Heart left ventricle (tissue), 16 donors: ENCODE measurements at regions of chr2 and their contacts with region 1.

Region 1: DNA sequence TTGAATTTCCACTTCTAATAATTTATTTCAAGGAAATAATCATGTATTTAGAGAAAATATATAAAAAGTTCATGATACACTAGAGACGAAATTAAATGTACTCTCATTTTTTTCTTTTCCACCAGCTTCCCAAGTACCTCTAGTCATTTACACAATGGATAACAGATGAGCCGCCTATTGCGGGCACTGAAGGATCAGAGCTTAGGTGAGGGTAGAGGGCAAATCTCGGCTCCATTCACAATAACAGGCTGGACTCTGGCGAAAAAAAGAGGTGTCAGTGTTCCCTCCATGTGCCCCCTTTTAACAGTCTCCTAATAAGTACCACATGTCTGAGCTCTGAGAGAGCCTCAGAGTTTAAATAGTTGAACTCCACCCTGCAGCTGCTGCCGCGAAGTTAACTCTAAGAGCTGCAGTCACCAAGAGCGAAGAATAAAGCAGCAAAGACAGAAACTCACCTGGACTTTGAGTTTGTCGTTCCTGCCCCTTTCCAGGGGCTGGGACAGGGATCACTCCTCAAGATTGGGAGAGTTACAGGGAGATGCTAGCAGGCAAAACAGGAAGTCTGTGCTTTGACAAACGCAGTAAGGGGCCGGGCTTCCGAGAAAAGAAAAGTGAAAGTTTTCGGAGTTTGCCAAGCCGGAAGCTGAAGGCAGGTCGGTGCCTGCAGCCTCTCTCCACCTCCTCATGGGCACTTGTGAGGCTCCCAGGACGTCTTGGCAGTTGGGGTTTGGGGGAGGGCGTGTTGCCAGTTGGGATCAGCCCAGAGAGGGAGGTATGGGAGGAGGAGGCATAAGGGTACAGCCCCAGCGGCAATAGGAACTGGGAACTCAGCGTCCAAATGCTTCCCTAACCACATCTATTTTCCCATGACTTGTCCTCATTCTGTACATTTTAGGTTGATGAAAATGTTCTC is at the start of gene SP110:
- DNase-seq: peak; percentile 78 to 82 (median 81)
- ATAC-seq: peak; percentile 91 to 98 (median 96)
- H3K4me3 ChIP-seq: peak within 1 kb of the TSS; percentile 49 to 85 (median 71)
- H3K27ac ChIP-seq: peak within 1 kb of the TSS; percentile 47 to 94 (median 79)
- H3K4me1 ChIP-seq: peaks cover 0 to 43% (median 12%) of the 10 kb centered on the region in 12 donors
- H3K27me3 ChIP-seq: no peaks in the 10 kb centered on the region
- CTCF ChIP-seq: no peak
- POLR2A ChIP-seq: no peak
- total RNA-seq, gene SP110: 7.1 to 44.7 (median 10.7) TPM

Region 2: DNA sequence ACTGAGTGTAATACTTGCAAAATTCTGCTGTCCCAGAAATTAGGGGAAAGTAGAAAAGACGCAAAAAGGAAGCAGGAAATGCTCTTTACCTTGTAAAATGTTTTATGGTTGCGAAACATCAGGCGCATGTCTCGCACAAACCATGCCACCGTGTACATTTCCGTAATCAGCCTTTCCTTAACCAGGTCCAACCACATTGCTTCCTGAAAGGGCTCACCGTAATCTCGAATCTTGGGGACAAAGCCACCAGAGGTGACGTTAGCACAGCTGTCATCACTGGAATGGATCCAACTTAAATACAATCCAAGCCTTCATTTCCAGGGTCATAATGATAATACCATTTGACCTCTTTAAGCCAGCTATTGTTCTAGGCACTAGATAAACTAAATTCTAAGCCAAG is 49.1 kb before region 1 on chr2:
- intact Hi-C with region 1: no loop called
- DNase-seq: peak in 2 of 5 donors; percentile 21 to 34
- ATAC-seq: peak; percentile 40 to 94 (median 68)
- H3K4me3 ChIP-seq: peak overlapping the region in 2 of 12 donors; percentile 2 to 6
- H3K27ac ChIP-seq: peak overlapping the region in 10 of 12 donors; percentile 2 to 85 (median 50)
- H3K4me1 ChIP-seq: peaks cover 0 to 8% (median 0%) of the 10 kb centered on the region in 12 donors
- H3K27me3 ChIP-seq: no peaks in the 10 kb centered on the region
- CTCF ChIP-seq: no peak
- POLR2A ChIP-seq: no peak

Region 3: GRCh38 chr2:230326453-230327417 is 107.1 kb after region 1 on chr2 and contains the start of gene SP140L:
- intact Hi-C with region 1: loop called in 4 of 10 experiments (anchors 5 to 10 kb)
- DNase-seq: peak; percentile 71 to 87 (median 79)
- ATAC-seq: peak; percentile 82 to 96 (median 94)
- H3K4me3 ChIP-seq: peak within 1 kb of the TSS; percentile 9 to 70 (median 50)
- H3K27ac ChIP-seq: peak within 1 kb of the TSS in 11 of 12 donors; percentile 59 to 96 (median 81)
- H3K4me1 ChIP-seq: peaks cover 0 to 61% (median 11%) of the 10 kb centered on the region in 12 donors
- H3K27me3 ChIP-seq: no peaks in the 10 kb centered on the region
- CTCF ChIP-seq: no peak
- POLR2A ChIP-seq: no peak
- total RNA-seq, gene SP140L: 2.5 to 17.6 (median 4.0) TPM

Region 4: GRCh38 chr2:230411570-230412370 is 192.1 kb after region 1 on chr2:
- intact Hi-C with region 1: loop called in 2 of 10 experiments (anchors 10 kb)
- DNase-seq: peak; percentile 70 to 83 (median 73)
- ATAC-seq: peak; percentile 40 to 84 (median 78)
- H3K4me3 ChIP-seq: peak overlapping the region; percentile 39 to 85 (median 70)
- H3K27ac ChIP-seq: peak overlapping the region; percentile 81 to 99 (median 94)
- H3K4me1 ChIP-seq: peaks cover 0 to 75% (median 35%) of the 10 kb centered on the region in 12 donors
- H3K27me3 ChIP-seq: no peaks in the 10 kb centered on the region
- CTCF ChIP-seq: no peak
- POLR2A ChIP-seq: no peak

Region 5: GRCh38 chr2:230457073-230457768 is 237.5 kb after region 1 on chr2:
- intact Hi-C with region 1: loop called in 1 of 10 experiments (anchors 10 kb)
- DNase-seq: peak in 1 of 5 donors; percentile 21
- ATAC-seq: peak in 3 of 4 donors; percentile 36 to 84 (median 80)
- H3K4me3 ChIP-seq: no peak overlapping the region
- H3K27ac ChIP-seq: peak overlapping the region in 1 of 12 donors; percentile 88
- H3K4me1 ChIP-seq: peaks cover 0 to 36% (median 0%) of the 10 kb centered on the region in 12 donors
- H3K27me3 ChIP-seq: no peaks in the 10 kb centered on the region
- CTCF ChIP-seq: no peak
- POLR2A ChIP-seq: no peak

Region 6: DNA sequence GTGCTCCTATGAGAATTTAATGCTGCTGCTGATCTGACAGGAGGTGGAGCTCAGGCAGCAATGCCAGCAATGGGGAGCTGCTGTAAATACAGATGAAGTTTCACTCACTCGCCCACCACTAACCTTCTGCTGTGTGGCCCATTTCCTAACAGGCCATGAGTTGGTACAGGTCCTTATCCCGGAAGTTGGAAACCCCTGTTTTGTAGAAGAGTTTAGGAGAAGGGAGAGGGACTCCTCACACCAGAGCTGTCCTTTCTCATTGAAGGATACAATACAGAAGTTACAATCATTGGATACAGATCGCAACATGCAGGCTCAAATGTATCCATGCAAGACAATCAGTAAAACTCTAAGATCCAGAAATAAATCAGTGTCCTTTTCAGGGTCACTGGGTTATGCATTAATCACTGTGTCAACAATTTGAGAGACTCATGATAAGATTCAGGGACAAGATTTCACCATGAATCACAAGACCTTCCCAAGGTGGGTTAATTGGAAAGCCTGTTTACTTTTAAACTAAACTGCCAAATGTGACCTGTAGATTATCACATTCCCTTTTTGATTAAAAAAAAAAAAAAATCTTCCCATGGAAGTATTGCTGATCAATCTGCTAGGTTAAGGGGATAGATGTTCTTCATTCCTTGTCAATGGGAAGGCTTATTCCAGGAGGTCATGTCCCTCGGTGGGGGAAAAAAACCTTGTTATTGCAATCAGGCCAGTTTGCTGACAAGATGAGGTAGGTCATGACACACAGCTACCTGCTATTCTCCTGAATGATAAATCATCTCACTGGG is 293.5 kb after region 1 on chr2:
- intact Hi-C with region 1: no loop called
- DNase-seq: no peak
- ATAC-seq: no peak
- H3K4me3 ChIP-seq: no peak overlapping the region
- H3K27ac ChIP-seq: no peak overlapping the region
- H3K4me1 ChIP-seq: no peaks in the 10 kb centered on the region
- H3K27me3 ChIP-seq: no peaks in the 10 kb centered on the region
- CTCF ChIP-seq: no peak
- POLR2A ChIP-seq: no peak